PC-9 (cell line): ENCODE measurements at regions of chr20 and their contacts with region 1.

Region 1: DNA sequence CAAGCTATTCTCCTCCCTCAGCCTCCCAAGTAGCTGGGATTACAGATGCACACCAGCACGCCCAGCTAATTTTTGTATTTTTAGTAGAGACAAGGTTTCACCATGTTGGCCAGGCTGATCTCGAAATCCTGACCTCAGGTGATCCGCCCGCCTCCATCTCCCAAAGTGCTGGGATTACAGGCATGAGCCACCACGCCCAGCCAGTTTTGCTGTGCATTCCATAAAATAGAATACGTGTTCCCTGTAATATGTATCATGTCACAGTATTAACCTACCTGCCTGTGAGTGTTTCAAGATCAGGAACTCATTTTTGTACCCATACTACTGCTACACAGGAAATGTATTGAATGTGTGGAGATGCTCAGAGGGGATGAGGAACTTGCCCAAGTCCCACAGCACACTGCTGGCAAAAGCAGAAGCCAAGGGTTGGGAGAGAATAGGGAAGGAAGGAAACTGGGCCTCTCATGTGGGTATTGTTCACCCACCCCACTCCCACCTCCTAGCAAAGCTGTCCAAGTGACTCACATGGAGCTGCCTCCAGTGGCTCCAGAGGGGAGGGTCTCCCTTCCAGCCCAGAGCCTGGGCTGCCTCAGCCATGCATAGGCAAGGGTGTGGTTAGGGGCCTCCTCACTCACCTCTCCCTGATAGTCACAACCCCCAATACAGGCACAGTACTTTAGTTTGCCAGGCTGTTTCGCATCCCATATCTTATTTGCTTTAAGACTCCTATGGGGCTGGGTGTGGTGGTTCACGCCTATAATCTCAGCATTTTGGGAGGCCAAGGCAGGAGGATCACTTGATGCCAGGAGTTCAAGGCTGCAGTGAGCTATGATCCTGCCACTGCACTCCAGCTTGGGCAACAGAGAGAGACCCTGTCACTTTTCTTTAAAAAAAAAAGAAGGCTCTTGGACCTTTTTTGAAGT is 9.4 kb downstream of the HM13 start:
- DNase-seq: no peak
- H3K4me3 ChIP-seq: no peak overlapping the region
- H3K27ac ChIP-seq: no peak overlapping the region
- H3K4me1 ChIP-seq: no peaks in the 10 kb centered on the region
- H3K27me3 ChIP-seq: no peaks in the 10 kb centered on the region
- CTCF ChIP-seq: no peak

Region 2: DNA sequence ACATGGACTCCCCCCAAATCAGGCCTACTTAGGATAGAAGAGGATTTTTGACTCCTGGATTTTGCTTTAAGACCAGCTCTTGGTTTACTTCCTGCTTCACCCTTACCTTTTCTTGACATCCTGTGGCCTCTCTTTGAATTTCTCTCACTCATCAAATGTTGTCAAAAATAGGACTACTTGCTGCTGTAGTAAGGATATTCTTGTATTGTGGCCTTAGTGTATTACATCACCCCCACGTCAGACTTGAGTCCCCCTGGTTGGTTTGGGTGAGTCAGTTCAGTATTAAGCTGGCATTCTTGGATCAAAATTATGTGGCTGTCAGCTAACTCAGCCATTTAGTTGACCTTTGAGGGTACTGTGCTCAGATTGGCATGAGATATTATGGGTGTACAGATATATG is 216.6 kb after region 1 on chr20:
- CTCF ChIA-PET with region 1: no interaction called
- POLR2A ChIA-PET with region 1: interaction called, 23 read pairs
- intact Hi-C with region 1: no loop called
- DNase-seq: peak in 1 of 2 experiments; percentile 47
- H3K4me3 ChIP-seq: peak overlapping the region; percentile 77
- H3K27ac ChIP-seq: peak overlapping the region; percentile 29; the same call in 1 of the 2 replicates
- H3K4me1 ChIP-seq: peaks cover 19% of the 10 kb centered on the region
- H3K27me3 ChIP-seq: no peaks in the 10 kb centered on the region
- CTCF ChIP-seq: no peak